Natural killer cell (primary cell): ENCODE measurements at regions of chr9 and their contacts with region 1.

Region 1: GRCh38 chr9:87944096-87944495 is 26.3 kb downstream of the SPATA31C1 start:
- DNase-seq: no peak
- ATAC-seq: no peak
- H3K4me3 ChIP-seq: no peak overlapping the region
- H3K4me3 Mint-ChIP-seq: no peak overlapping the region
- H3K27ac ChIP-seq: no peak overlapping the region
- H3K27ac Mint-ChIP-seq: no peak overlapping the region
- H3K4me1 ChIP-seq: no peaks in the 10 kb centered on the region
- H3K4me1 Mint-ChIP-seq: no peaks in the 10 kb centered on the region
- H3K27me3 ChIP-seq: peaks cover 8% of the 10 kb centered on the region
- H3K27me3 Mint-ChIP-seq: peaks cover 8 to 18% of the 10 kb centered on the region in 2 donors
- CTCF ChIP-seq: no peak

Region 2: GRCh38 chr9:88110026-88110425 is 165.9 kb after region 1 on chr9:
- intact Hi-C with region 1: loop called (anchors 10 kb)
- DNase-seq: no peak
- ATAC-seq: no peak
- H3K4me3 ChIP-seq: no peak overlapping the region
- H3K4me3 Mint-ChIP-seq: no peak overlapping the region
- H3K27ac ChIP-seq: no peak overlapping the region
- H3K27ac Mint-ChIP-seq: no peak overlapping the region
- H3K4me1 ChIP-seq: no peaks in the 10 kb centered on the region
- H3K4me1 Mint-ChIP-seq: no peaks in the 10 kb centered on the region
- H3K27me3 ChIP-seq: no peaks in the 10 kb centered on the region
- H3K27me3 Mint-ChIP-seq: peaks cover 14 to 34% of the 10 kb centered on the region in 2 donors
- CTCF ChIP-seq: no peak

Region 3: GRCh38 chr9:88747768-88748167 is 803.7 kb after region 1 on chr9:
- intact Hi-C with region 1: no loop called
- DNase-seq: no peak
- ATAC-seq: no peak
- H3K4me3 ChIP-seq: no peak overlapping the region
- H3K4me3 Mint-ChIP-seq: no peak overlapping the region
- H3K27ac ChIP-seq: no peak overlapping the region
- H3K27ac Mint-ChIP-seq: no peak overlapping the region
- H3K4me1 ChIP-seq: no peaks in the 10 kb centered on the region
- H3K4me1 Mint-ChIP-seq: no peaks in the 10 kb centered on the region
- H3K27me3 ChIP-seq: no peaks in the 10 kb centered on the region
- H3K27me3 Mint-ChIP-seq: peaks cover 4 to 9% of the 10 kb centered on the region in 2 donors
- CTCF ChIP-seq: no peak

Region 4: GRCh38 chr9:89149726-89150125 is 1205.6 kb after region 1 on chr9:
- intact Hi-C with region 1: no loop called
- DNase-seq: no peak
- ATAC-seq: no peak
- H3K4me3 ChIP-seq: no peak overlapping the region
- H3K4me3 Mint-ChIP-seq: no peak overlapping the region
- H3K27ac ChIP-seq: no peak overlapping the region
- H3K27ac Mint-ChIP-seq: no peak overlapping the region
- H3K4me1 ChIP-seq: no peaks in the 10 kb centered on the region
- H3K4me1 Mint-ChIP-seq: peaks cover 3 to 4% of the 10 kb centered on the region in 2 donors
- H3K27me3 ChIP-seq: no peaks in the 10 kb centered on the region
- H3K27me3 Mint-ChIP-seq: peaks cover 12 to 35% of the 10 kb centered on the region in 2 donors
- CTCF ChIP-seq: no peak